ENCODE measurements at regions of chr2 and their contacts with region 1.

Region 1: GRCh38 chr2:157420771-157421323 is 23.0 kb downstream of the CYTIP start:
- DNase-seq: peak; percentile 60
- ATAC-seq: peak; percentile 57
- H3K4me3 Mint-ChIP-seq: peak overlapping the region; percentile 52
- H3K27ac Mint-ChIP-seq: peak overlapping the region; percentile 93
- H3K4me1 Mint-ChIP-seq: peaks cover 78% of the 10 kb centered on the region
- H3K27me3 Mint-ChIP-seq: no peaks in the 10 kb centered on the region

Region 2: GRCh38 chr2:157087373-157088002 is 333.4 kb before region 1 on chr2:
- CTCF ChIA-PET with region 1: no interaction called
- POLR2A ChIA-PET with region 1: no interaction called
- intact Hi-C with region 1: no loop called
- DNase-seq: no peak
- ATAC-seq: no peak
- H3K4me3 Mint-ChIP-seq: no peak overlapping the region
- H3K27ac Mint-ChIP-seq: no peak overlapping the region
- H3K4me1 Mint-ChIP-seq: no peaks in the 10 kb centered on the region
- H3K27me3 Mint-ChIP-seq: no peaks in the 10 kb centered on the region

Region 3: DNA sequence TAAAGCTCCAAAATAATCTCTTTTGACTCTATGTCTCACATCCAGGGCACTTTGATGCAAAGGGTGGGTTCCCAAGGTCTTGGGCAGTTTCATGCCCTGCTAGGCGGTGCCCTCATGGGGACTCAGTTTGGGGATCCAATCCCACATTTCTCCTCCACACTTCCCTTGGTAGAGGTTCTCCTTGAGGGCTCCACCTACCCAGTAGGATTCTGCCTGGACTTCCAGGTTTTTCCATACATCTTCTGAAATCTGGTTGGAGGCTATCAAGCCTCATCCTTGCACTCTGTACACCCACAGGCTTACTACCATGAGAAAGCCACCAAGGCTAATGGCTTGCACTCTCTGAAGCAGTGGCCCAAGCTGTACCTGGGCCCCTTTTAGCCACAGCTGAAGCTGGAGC is 45.5 kb before region 1 on chr2:
- CTCF ChIA-PET with region 1: no interaction called
- POLR2A ChIA-PET with region 1: no interaction called
- intact Hi-C with region 1: no loop called
- DNase-seq: no peak
- ATAC-seq: no peak
- H3K4me3 Mint-ChIP-seq: no peak overlapping the region
- H3K27ac Mint-ChIP-seq: no peak overlapping the region
- H3K4me1 Mint-ChIP-seq: peaks cover 20% of the 10 kb centered on the region
- H3K27me3 Mint-ChIP-seq: no peaks in the 10 kb centered on the region

Region 4: DNA sequence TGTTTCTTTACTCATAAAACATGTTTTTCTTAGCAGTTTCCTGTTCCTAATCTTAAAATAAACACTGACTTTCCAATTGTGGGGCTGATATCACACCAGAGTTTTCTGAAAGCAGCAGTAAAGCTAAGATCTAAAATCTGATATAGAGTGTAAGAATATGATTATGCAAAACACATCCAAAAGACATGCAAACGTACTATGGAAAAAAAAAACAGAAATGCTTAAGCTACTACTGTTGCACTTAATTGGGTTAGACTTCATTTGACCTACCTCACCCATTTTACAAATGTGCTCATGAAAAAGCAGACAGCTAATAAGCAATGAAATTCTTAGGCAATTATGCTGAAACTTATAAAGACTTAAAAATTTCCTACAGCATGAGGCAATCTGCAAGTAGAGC is 12.5 kb after region 1 on chr2:
- CTCF ChIA-PET with region 1: interaction called, 50 read pairs
- POLR2A ChIA-PET with region 1: interaction called, 26 read pairs
- intact Hi-C with region 1: loop called in 1 of 2 experiments (anchors 1 kb)
- DNase-seq: no peak
- ATAC-seq: no peak
- H3K4me3 Mint-ChIP-seq: peak overlapping the region; percentile 93
- H3K27ac Mint-ChIP-seq: peak overlapping the region; percentile 95
- H3K4me1 Mint-ChIP-seq: peaks cover 60% of the 10 kb centered on the region
- H3K27me3 Mint-ChIP-seq: no peaks in the 10 kb centered on the region

Region 5: GRCh38 chr2:157480182-157480961 is 59.5 kb after region 1 on chr2:
- CTCF ChIA-PET with region 1: interaction called, 6 read pairs
- POLR2A ChIA-PET with region 1: interaction called, 25 read pairs
- intact Hi-C with region 1: loop called (anchors 1 kb)
- DNase-seq: peak; percentile 81
- ATAC-seq: peak; percentile 71
- H3K4me3 Mint-ChIP-seq: peak overlapping the region; percentile 64
- H3K27ac Mint-ChIP-seq: peak overlapping the region; percentile 95
- H3K4me1 Mint-ChIP-seq: peaks cover 86% of the 10 kb centered on the region
- H3K27me3 Mint-ChIP-seq: no peaks in the 10 kb centered on the region

Region 6: GRCh38 chr2:157596992-157597681 is 176.3 kb after region 1 on chr2:
- CTCF ChIA-PET with region 1: no interaction called
- POLR2A ChIA-PET with region 1: no interaction called
- intact Hi-C with region 1: loop called in 1 of 2 experiments (anchors 10 kb)
- DNase-seq: peak; percentile 81
- ATAC-seq: peak; percentile 88
- H3K4me3 Mint-ChIP-seq: peak overlapping the region; percentile 59
- H3K27ac Mint-ChIP-seq: no peak overlapping the region
- H3K4me1 Mint-ChIP-seq: peaks cover 8% of the 10 kb centered on the region
- H3K27me3 Mint-ChIP-seq: peaks cover 5% of the 10 kb centered on the region